PC-9 (cell line): ENCODE measurements at regions of chr14 and their contacts with region 1.

Region 1: DNA sequence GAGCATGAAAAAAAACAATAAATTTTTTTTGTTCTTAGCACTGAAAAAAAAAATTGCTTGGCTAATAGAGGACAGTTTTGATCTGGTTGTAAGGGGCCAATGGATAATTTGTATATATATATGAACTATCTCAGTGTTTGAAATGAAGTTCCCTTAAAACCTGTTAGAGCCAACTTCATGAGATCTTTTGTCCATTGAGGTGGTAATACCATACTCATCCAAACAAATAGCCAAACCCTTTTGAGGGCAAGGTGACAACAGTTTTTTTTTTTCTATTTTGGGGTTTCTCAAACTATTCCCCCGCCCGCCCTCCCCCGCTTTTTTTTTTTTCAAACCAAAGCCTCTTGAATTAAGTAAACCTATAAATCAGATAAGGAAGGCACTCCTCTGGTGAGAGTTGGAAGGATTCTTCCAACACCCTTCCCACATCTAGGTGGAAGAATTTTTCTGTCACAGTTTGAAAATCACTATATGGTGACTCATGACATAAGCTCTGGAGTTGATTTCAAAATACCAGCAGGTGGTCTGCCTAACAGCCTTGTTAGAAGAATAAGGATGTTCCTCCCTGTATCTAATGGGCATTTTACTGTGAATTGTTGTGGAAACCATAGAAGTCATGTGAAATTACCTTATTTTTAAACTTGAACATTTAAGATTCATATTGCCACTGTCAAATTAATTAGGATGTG is 10.2 kb downstream of the ARHGAP5 start:
- DNase-seq: peak; percentile 19 to 86
- H3K4me3 ChIP-seq: no peak overlapping the region
- H3K27ac ChIP-seq: peak overlapping the region; percentile 28
- H3K4me1 ChIP-seq: peaks cover 38% of the 10 kb centered on the region
- H3K27me3 ChIP-seq: no peaks in the 10 kb centered on the region
- CTCF ChIP-seq: no peak

Region 2: GRCh38 chr14:31951638-31951964 is 135.7 kb before region 1 on chr14:
- CTCF ChIA-PET with region 1: no interaction called
- POLR2A ChIA-PET with region 1: interaction called, 10 read pairs
- intact Hi-C with region 1: no loop called
- DNase-seq: no peak
- H3K4me3 ChIP-seq: no peak overlapping the region
- H3K27ac ChIP-seq: no peak overlapping the region
- H3K4me1 ChIP-seq: peaks cover 25% of the 10 kb centered on the region
- H3K27me3 ChIP-seq: no peaks in the 10 kb centered on the region
- CTCF ChIP-seq: no peak

Region 3: DNA sequence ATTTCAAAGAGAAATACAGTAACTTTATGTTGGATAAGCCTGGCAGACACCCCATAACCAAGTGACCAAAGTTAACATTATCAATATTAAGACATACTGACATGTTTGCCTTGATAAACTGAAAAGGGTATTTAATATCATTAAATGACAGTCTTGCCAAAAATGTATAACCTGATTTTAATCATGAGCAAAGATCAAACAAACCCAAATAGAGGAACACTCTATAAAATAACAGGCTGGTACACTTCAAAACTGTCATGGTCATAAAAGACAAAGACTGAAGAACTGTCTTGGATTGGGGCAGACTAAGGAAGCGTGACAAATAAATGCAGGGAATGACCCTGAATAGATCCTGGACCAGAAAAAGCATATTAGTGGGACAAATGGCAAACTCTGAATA is 305.8 kb after region 1 on chr14:
- CTCF ChIA-PET with region 1: no interaction called
- POLR2A ChIA-PET with region 1: no interaction called
- intact Hi-C with region 1: no loop called
- DNase-seq: no peak
- H3K4me3 ChIP-seq: no peak overlapping the region
- H3K27ac ChIP-seq: no peak overlapping the region
- H3K4me1 ChIP-seq: peaks cover 14% of the 10 kb centered on the region
- H3K27me3 ChIP-seq: no peaks in the 10 kb centered on the region
- CTCF ChIP-seq: no peak